SK-MEL-5 (cell line): ENCODE measurements at regions of chr19 and their contacts with region 1.

Region 1: GRCh38 chr19:5480427-5480836 is 25.2 kb downstream of the ZNRF4 start:
- DNase-seq: peak; percentile 30

Region 2: GRCh38 chr19:5340637-5341447 is 139.6 kb before region 1 on chr19 and contains the start of gene PTPRS:
- in situ Hi-C with region 1: loop called (anchors 25 kb)
- DNase-seq: peak; percentile 76
- total RNA-seq, gene PTPRS: 74.6 and 79.7 TPM in 2 replicates

Region 3: GRCh38 chr19:5707576-5708575 is 227.4 kb after region 1 on chr19:
- in situ Hi-C with region 1: no loop called
- DNase-seq: no peak